Lower leg skin (tissue), 4 donors: ENCODE measurements at regions of chr3 and their contacts with region 1.

Region 1: DNA sequence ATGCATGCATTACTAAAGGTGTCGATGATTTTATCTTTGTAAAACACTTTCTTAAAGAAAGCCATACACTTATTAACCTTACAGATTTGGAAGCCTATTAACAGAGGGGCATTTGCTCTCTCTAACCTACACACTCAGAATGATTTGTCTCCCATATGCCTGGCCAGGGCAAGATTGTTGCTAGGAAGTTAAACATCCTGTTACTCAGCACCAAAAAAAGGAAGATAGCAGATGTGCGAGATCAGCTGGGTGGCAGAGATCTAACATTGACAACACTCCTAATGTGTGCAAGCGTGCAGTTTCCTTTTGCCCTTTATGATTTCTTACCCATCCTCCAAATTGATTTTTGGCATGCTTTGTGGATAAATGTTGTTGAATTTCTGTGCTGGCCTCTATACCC is 73.9 kb upstream of the TMEM108 start:
- DNase-seq: no peak
- H3K4me3 ChIP-seq: no peak overlapping the region
- CTCF ChIP-seq: no peak
- POLR2A ChIP-seq: no peak

Region 2: GRCh38 chr3:132399054-132399929 is 565.0 kb before region 1 on chr3:
- intact Hi-C with region 1: loop called (anchors 10 kb)
- DNase-seq: no peak
- H3K4me3 ChIP-seq: no peak overlapping the region
- CTCF ChIP-seq: no peak
- POLR2A ChIP-seq: no peak